ENCODE measurements at regions of chr1 and their contacts with region 1.

Region 1: GRCh38 chr1:203340112-203340804 is 10.7 kb downstream of the FMOD start:
- DNase-seq: peak; percentile 90
- H3K4me3 ChIP-seq: no peak overlapping the region
- H3K27ac ChIP-seq: no peak overlapping the region
- H3K4me1 ChIP-seq: no peaks in the 10 kb centered on the region
- H3K27me3 ChIP-seq: peaks cover 8% of the 10 kb centered on the region
- CTCF ChIP-seq: peak; percentile 97

Region 2: GRCh38 chr1:203216274-203217138 is 123.8 kb before region 1 on chr1:
- CTCF ChIA-PET with region 1: no interaction called
- POLR2A ChIA-PET with region 1: no interaction called
- intact Hi-C with region 1: no loop called
- DNase-seq: peak; percentile 81
- H3K4me3 ChIP-seq: no peak overlapping the region
- H3K27ac ChIP-seq: no peak overlapping the region
- H3K4me1 ChIP-seq: no peaks in the 10 kb centered on the region
- H3K27me3 ChIP-seq: no peaks in the 10 kb centered on the region
- CTCF ChIP-seq: peak; percentile 74

Region 3: DNA sequence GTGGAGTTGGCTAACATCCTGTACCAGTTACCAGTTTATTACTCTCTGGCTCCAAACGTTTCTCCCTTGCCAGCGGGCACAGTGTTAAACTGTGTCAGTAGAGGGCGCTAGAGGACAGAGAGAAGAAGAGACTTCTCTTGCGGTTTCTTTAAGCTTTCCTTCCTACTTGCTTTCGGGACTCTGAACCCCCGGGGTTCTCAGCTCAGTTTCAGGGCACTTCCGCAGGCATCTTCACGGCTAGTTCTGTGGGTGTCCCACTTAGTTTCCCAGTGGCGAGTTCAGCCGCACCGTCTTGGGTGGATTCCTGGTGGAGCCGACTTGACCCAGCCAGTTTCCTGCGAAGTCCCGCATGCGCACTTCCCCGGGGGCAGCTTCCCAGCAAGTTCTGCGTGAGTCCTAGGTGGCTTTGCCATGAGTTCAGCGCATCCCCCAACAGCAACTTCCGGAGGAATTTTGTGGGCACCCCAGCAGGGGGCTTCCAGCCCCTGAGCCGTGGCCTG is 72.9 kb before region 1 on chr1:
- CTCF ChIA-PET with region 1: interaction called, 11 read pairs
- POLR2A ChIA-PET with region 1: no interaction called
- intact Hi-C with region 1: no loop called
- DNase-seq: peak; percentile 95
- H3K4me3 ChIP-seq: peak overlapping the region; percentile 52
- H3K27ac ChIP-seq: peak overlapping the region; percentile 39
- H3K4me1 ChIP-seq: peaks cover 16% of the 10 kb centered on the region
- H3K27me3 ChIP-seq: no peaks in the 10 kb centered on the region
- CTCF ChIP-seq: peak; percentile 94

Region 4: DNA sequence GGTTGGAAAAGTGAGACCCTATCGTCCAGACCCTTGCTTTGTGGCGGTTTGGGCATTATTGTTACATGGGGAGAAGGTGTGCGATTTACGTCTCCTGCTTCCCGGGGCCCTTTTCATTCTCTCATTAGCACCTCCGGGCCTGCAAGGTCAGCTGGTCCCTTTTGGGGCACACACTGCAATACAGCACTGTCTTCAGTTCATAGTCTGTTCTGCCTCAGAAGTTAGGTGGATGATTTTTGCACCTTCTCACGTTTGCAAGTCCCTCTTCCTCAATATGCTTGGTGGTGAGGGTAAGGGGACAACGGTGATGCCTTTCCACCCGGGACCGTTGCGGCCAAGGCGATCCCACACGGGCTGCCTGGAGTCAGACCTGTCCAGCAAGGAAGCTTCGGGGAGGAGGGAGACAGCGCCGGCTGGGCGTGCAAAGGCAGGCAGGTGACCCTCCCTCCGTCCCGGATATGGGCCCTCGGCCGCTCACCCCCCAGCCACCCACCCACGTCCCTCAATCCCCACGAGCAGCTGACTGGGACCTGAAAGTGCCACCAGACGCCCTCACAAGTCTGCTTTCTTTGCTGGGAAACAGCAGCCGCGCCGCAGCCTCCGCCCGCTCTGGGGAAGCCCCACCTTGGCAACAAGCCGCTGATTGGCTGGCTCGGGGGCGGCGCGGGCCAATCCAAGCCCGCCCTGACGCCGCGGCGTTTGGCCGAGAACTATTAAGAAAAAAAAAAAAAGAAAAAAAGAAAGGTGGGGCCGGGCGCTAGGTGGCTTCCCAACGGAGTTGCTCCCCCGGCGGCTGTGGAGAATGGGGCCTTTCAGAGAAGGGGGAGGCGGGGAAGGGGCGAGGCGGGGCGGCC is 13.2 kb before region 1 on chr1:
- CTCF ChIA-PET with region 1: interaction called, 4 read pairs
- POLR2A ChIA-PET with region 1: no interaction called
- intact Hi-C with region 1: loop called (anchors 1 kb)
- DNase-seq: peak; percentile 95
- H3K4me3 ChIP-seq: peak overlapping the region; percentile 52
- H3K27ac ChIP-seq: peak overlapping the region; percentile 81
- H3K4me1 ChIP-seq: peaks cover 39% of the 10 kb centered on the region
- H3K27me3 ChIP-seq: no peaks in the 10 kb centered on the region
- CTCF ChIP-seq: no peak

Region 5: DNA sequence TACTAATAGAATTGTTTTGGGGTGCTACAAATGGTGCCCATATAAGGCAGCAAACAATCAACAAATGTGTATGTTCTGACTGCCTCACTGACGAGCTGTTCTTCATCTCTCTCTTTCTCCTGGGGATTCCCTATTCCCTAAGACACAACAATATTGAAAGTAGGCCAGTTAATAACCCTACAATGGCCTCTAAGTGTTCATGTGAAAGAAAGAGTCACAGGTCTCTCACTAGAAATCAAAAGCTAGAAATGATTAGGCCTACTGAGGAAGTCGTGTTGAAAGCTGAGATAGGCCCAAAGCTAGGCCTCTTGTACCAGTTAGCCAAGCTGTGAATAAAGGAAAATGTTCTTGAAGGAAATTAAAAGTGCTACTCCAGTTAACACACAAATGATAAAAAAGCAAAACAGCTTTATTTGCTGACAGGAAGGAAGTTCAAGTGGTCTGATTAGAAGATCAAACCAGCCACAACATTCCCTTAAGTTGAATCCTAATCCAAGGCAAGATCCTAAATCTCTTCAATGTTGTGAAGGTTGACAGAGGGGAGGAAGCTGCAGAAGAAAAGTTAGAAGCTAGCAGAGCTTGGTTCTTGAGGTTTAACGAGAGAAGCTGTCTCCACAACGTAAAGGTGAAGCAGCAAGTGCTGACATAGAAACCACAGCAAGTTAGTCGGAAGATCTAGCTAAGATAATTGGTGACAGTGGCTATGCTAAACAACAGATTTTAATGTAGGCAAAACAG is 312.6 kb after region 1 on chr1:
- CTCF ChIA-PET with region 1: interaction called, 11 read pairs
- POLR2A ChIA-PET with region 1: no interaction called
- intact Hi-C with region 1: no loop called
- DNase-seq: peak; percentile 16
- H3K4me3 ChIP-seq: no peak overlapping the region
- H3K27ac ChIP-seq: peak overlapping the region; percentile 16
- H3K4me1 ChIP-seq: no peaks in the 10 kb centered on the region
- H3K27me3 ChIP-seq: no peaks in the 10 kb centered on the region
- CTCF ChIP-seq: no peak

Region 6: GRCh38 chr1:203733009-203733863 is 393.0 kb after region 1 on chr1:
- CTCF ChIA-PET with region 1: no interaction called
- POLR2A ChIA-PET with region 1: no interaction called
- intact Hi-C with region 1: no loop called
- DNase-seq: no peak
- H3K4me3 ChIP-seq: no peak overlapping the region
- H3K27ac ChIP-seq: no peak overlapping the region
- H3K4me1 ChIP-seq: no peaks in the 10 kb centered on the region
- H3K27me3 ChIP-seq: no peaks in the 10 kb centered on the region
- CTCF ChIP-seq: no peak

Measured in A673 (cell line).